AG04449 (cell line): ENCODE measurements at regions of chr1 and their contacts with region 1.

Region 1: DNA sequence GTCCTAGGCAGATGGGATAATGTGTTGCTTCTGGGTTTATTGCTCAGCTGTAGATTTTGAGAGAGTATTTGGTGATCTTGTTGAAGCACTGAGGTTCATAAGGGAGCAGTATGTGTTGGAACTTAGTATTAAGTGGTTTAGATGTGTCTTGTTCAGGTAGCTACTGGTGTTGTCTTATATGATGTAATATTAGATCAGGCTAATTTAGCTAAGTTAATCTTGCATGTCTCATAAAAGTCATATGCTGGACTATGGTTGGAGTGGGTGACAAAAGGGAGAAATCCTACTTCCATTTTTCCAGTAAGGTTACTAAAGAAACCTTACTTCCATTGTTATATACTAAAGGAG is 196.4 kb downstream of the CLEC20A start:
- DNase-seq: no peak
- H3K4me3 ChIP-seq: no peak overlapping the region
- CTCF ChIP-seq: no peak

Region 2: GRCh38 chr1:178052650-178053461 is 247.5 kb before region 1 on chr1:
- CTCF ChIA-PET with region 1: interaction called, 12 read pairs
- POLR2A ChIA-PET with region 1: no interaction called
- DNase-seq: no peak
- H3K4me3 ChIP-seq: no peak overlapping the region
- CTCF ChIP-seq: no peak

Region 3: DNA sequence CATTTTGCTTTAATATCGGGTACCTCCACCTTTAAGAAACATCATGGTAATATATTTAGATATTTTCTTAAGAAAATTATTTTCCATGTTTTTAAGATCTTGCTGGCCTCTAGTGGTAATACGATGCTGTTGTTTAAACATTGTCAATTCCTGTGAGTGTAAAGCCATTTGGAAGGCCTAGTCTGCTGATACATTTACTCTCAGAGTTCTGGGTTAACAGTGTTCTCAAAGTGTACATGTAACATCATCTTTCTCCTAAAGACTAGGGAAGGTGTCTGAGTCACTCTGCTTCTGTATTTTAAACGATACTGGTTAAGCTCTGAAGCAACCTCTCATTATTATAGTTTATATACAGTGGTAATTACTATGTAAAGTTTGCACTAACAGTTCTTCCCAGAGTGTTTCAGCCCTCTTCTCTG is 17.4 kb before region 1 on chr1:
- CTCF ChIA-PET with region 1: interaction called, 19 read pairs
- POLR2A ChIA-PET with region 1: no interaction called
- DNase-seq: peak; percentile 24
- H3K4me3 ChIP-seq: no peak overlapping the region
- CTCF ChIP-seq: peak; percentile 35

Region 4: GRCh38 chr1:178310685-178311105 is 10.4 kb after region 1 on chr1:
- CTCF ChIA-PET with region 1: interaction called, 64 read pairs
- POLR2A ChIA-PET with region 1: no interaction called
- DNase-seq: peak; percentile 34
- H3K4me3 ChIP-seq: no peak overlapping the region
- CTCF ChIP-seq: peak; percentile 43

Region 5: DNA sequence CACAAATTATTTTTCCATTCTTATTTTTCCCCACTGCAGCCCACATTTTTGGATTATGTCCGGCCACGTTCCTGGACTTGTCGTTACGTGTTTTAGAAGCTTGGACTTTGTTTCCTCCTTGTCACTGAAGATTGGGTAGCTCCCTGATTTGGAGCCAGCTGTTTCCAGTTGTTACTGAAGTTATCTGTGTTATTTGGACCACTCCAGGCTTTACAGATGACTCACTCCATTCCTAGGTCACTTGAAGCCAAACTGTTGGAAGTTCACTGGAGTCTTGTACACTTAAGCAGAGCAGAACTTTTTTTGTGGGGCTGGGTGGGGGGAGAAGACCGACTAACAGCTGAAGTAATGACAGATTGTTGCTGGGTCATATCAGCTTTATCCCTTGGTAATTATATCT is 1053.2 kb after region 1 on chr1:
- CTCF ChIA-PET with region 1: no interaction called
- POLR2A ChIA-PET with region 1: no interaction called
- DNase-seq: peak; percentile 23
- H3K4me3 ChIP-seq: no peak overlapping the region
- CTCF ChIP-seq: no peak